B cell (primary cell): ENCODE measurements at regions of chr6 and their contacts with region 1.

Region 1: DNA sequence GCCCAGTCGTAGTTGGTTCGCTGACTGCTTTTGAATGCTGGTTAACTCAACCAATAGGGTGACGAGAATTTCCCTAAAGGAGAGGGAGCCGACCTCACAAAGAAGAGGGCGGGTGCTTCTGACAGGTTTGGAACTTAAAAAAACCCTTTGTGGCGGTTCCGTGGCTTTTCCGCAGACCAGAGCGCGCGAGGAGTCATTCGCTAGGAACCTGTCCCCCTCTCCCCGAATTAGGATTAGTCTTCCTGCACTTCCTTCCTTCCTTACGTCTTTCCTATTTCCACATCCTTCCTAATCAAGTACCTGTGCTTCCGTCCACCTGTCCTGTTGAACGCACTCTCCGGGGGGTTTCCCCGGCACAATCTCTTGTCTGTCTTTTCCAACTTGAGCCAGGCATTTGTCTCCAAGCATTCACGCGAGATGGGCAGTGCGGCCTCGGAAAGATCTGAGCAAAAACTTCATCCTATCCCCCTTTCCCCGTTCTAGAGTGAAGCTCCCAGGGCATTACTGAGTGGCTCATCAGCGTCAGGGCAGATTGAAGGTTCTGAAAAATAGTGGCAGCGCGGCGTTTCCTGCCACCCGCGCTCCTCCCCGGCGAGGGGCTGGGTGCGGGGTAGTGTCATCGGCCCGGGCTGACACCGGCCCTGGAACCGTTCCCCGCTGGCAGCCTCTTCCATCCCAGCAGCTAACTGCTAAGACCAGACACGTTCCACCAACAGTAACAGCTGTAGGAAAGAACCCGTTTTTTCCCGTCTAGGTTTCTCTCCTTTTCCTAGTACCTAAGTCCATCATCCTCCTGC is 1.5 kb upstream of the STXBP5 start:
- DNase-seq: peak; percentile 94
- ATAC-seq: peak; percentile 78
- H3K4me3 ChIP-seq: peak overlapping the region; percentile 59 to 95 (median 92)
- H3K4me3 Mint-ChIP-seq: peak overlapping the region; percentile 93
- H3K27ac ChIP-seq: peak overlapping the region; percentile 72 to 97
- H3K27ac Mint-ChIP-seq: peak overlapping the region; percentile 95
- H3K4me1 ChIP-seq: peaks cover 17 to 22% of the 10 kb centered on the region in 2 donors
- H3K4me1 Mint-ChIP-seq: peaks cover 27% of the 10 kb centered on the region
- H3K27me3 ChIP-seq: no peaks in the 10 kb centered on the region
- H3K27me3 Mint-ChIP-seq: no peaks in the 10 kb centered on the region
- CTCF ChIP-seq: no peak

Region 2: GRCh38 chr6:145734486-145735355 is 1468.0 kb before region 1 on chr6:
- CTCF ChIA-PET with region 1: no interaction called
- POLR2A ChIA-PET with region 1: no interaction called
- intact Hi-C with region 1: loop called (anchors 5 kb)
- DNase-seq: peak; percentile 79
- ATAC-seq: peak; percentile 70
- H3K4me3 ChIP-seq: peak overlapping the region; percentile 12 to 90 (median 74)
- H3K4me3 Mint-ChIP-seq: peak overlapping the region; percentile 97
- H3K27ac ChIP-seq: peak overlapping the region; percentile 65 to 98
- H3K27ac Mint-ChIP-seq: peak overlapping the region; percentile 96
- H3K4me1 ChIP-seq: peaks cover 14 to 30% of the 10 kb centered on the region in 2 donors
- H3K4me1 Mint-ChIP-seq: peaks cover 31% of the 10 kb centered on the region
- H3K27me3 ChIP-seq: no peaks in the 10 kb centered on the region
- H3K27me3 Mint-ChIP-seq: no peaks in the 10 kb centered on the region
- CTCF ChIP-seq: no peak

Region 3: DNA sequence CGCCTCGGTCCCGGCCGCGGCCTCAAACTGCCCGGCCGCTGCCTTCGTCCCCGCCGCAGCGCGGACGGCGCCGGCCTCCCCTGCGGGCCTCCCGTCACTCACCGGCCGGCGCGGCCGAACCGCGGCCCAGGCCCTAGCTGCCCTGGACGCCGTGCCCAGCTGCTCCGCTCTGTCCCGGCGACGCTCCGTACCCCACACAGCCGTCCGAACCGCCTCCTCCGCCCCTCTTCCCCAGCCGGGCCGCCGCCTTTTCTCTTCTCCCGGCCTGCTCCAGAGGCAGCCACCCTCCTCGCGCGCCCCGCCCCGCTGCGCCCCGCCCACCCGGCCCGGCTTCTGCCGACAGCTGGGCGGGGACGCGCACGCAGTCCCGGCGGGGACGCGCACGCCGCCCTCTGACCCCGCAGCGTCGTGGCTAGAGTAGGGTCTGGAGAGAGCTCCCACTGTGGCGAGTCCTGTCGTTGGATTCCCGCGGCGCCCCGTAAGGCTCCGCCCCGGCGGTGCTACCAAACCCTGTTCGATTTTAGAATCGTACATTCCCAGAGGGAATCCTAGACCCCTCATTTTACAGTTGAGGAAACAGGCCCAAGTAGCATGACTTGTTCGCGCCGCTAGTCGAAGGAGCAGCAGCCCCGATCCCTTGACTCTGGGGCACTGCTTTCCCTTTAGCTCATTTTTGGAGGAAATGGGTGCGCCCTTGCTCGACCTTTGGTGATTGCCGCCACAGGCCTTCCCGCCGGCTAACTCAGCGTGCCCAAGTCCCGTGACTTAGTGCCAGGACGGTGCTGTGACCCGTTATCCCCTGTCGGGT is 1388.0 kb before region 1 on chr6 and contains the start of gene FBXO30:
- CTCF ChIA-PET with region 1: no interaction called
- POLR2A ChIA-PET with region 1: no interaction called
- intact Hi-C with region 1: loop called (anchors 2 kb)
- DNase-seq: peak; percentile 93
- ATAC-seq: peak; percentile 91
- H3K4me3 ChIP-seq: peak within 1 kb of the TSS; percentile 60 to 94 (median 90)
- H3K4me3 Mint-ChIP-seq: peak within 1 kb of the TSS; percentile 96
- H3K27ac ChIP-seq: peak within 1 kb of the TSS; percentile 76 to 89
- H3K27ac Mint-ChIP-seq: peak within 1 kb of the TSS; percentile 96
- H3K4me1 ChIP-seq: peaks cover 26 to 32% of the 10 kb centered on the region in 2 donors
- H3K4me1 Mint-ChIP-seq: peaks cover 44% of the 10 kb centered on the region
- H3K27me3 ChIP-seq: no peaks in the 10 kb centered on the region
- H3K27me3 Mint-ChIP-seq: no peaks in the 10 kb centered on the region
- CTCF ChIP-seq: peak; percentile 18
- total RNA-seq, gene FBXO30: 9.7 and 10.2 TPM in 2 replicates

Region 4: GRCh38 chr6:146857180-146857979 is 345.3 kb before region 1 on chr6:
- CTCF ChIA-PET with region 1: no interaction called
- POLR2A ChIA-PET with region 1: no interaction called
- intact Hi-C with region 1: loop called (anchors 5 kb)
- DNase-seq: peak; percentile 72
- ATAC-seq: peak; percentile 92
- H3K4me3 ChIP-seq: peak overlapping the region in 4 of 5 experiments; percentile 27 to 45 (median 36)
- H3K4me3 Mint-ChIP-seq: peak overlapping the region; percentile 78
- H3K27ac ChIP-seq: no peak overlapping the region
- H3K27ac Mint-ChIP-seq: peak overlapping the region; percentile 62
- H3K4me1 ChIP-seq: peaks cover 3 to 4% of the 10 kb centered on the region in 2 donors
- H3K4me1 Mint-ChIP-seq: peaks cover 8% of the 10 kb centered on the region
- H3K27me3 ChIP-seq: peaks cover 0 to 3% (median 0%) of the 10 kb centered on the region in 4 experiments
- H3K27me3 Mint-ChIP-seq: peaks cover 6% of the 10 kb centered on the region
- CTCF ChIP-seq: peak; percentile 99

Region 5: GRCh38 chr6:146931208-146931607 is 271.5 kb before region 1 on chr6:
- CTCF ChIA-PET with region 1: no interaction called
- POLR2A ChIA-PET with region 1: no interaction called
- intact Hi-C with region 1: no loop called
- DNase-seq: no peak
- ATAC-seq: no peak
- H3K4me3 ChIP-seq: no peak overlapping the region
- H3K4me3 Mint-ChIP-seq: no peak overlapping the region
- H3K27ac ChIP-seq: no peak overlapping the region
- H3K27ac Mint-ChIP-seq: no peak overlapping the region
- H3K4me1 ChIP-seq: no peaks in the 10 kb centered on the region
- H3K4me1 Mint-ChIP-seq: no peaks in the 10 kb centered on the region
- H3K27me3 ChIP-seq: no peaks in the 10 kb centered on the region
- H3K27me3 Mint-ChIP-seq: peaks cover 9% of the 10 kb centered on the region
- CTCF ChIP-seq: no peak

Region 6: GRCh38 chr6:147043994-147044477 is 158.7 kb before region 1 on chr6:
- CTCF ChIA-PET with region 1: no interaction called
- POLR2A ChIA-PET with region 1: no interaction called
- intact Hi-C with region 1: no loop called
- DNase-seq: no peak
- ATAC-seq: no peak
- H3K4me3 ChIP-seq: no peak overlapping the region
- H3K4me3 Mint-ChIP-seq: no peak overlapping the region
- H3K27ac ChIP-seq: no peak overlapping the region
- H3K27ac Mint-ChIP-seq: no peak overlapping the region
- H3K4me1 ChIP-seq: no peaks in the 10 kb centered on the region
- H3K4me1 Mint-ChIP-seq: no peaks in the 10 kb centered on the region
- H3K27me3 ChIP-seq: no peaks in the 10 kb centered on the region
- H3K27me3 Mint-ChIP-seq: peaks cover 4% of the 10 kb centered on the region
- CTCF ChIP-seq: no peak

Region 7: GRCh38 chr6:147322299-147323162 is 119.8 kb after region 1 on chr6:
- CTCF ChIA-PET with region 1: no interaction called
- POLR2A ChIA-PET with region 1: no interaction called
- intact Hi-C with region 1: loop called (anchors 2 kb)
- DNase-seq: peak; percentile 73
- ATAC-seq: peak; percentile 94
- H3K4me3 ChIP-seq: peak overlapping the region; percentile 35 to 89 (median 58)
- H3K4me3 Mint-ChIP-seq: peak overlapping the region; percentile 92
- H3K27ac ChIP-seq: peak overlapping the region; percentile 58 to 89
- H3K27ac Mint-ChIP-seq: peak overlapping the region; percentile 96
- H3K4me1 ChIP-seq: peaks cover 16% of the 10 kb centered on the region in 2 donors
- H3K4me1 Mint-ChIP-seq: peaks cover 26% of the 10 kb centered on the region
- H3K27me3 ChIP-seq: no peaks in the 10 kb centered on the region
- H3K27me3 Mint-ChIP-seq: no peaks in the 10 kb centered on the region
- CTCF ChIP-seq: no peak